Adrenal gland (tissue), 19 donors: ENCODE measurements at regions of chr10 and their contacts with region 1.

Region 1: DNA sequence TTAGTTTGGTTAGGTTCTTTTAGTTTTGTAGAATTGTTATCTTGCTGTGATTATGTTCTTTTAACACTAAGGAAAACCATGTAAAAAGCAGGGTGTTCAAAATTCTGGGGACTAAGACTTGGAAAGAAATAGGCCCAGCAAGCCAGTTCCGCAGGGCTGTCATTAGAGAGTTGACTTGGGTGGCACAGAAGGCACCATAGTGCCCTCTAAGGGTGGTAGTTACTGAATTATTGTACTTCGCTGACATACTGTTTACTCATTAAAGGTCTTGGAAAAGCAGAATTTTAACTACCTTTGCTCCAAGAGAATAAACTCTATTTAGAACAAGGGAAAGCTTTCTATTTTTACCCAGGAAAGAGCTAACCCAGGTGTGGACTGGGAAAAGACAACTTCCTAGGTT is 86.5 kb downstream of the OTUD1 start:
- DNase-seq: peak in 6 of 7 donors; percentile 25 to 69 (median 44)
- H3K4me3 ChIP-seq: no peak overlapping the region
- H3K27ac ChIP-seq: no peak overlapping the region
- H3K4me1 ChIP-seq: no peaks in the 10 kb centered on the region
- H3K27me3 ChIP-seq: no peaks in the 10 kb centered on the region
- CTCF ChIP-seq: peak; percentile 29 to 61 (median 56)
- POLR2A ChIP-seq: no peak

Region 2: GRCh38 chr10:23344241-23344841 is 181.1 kb before region 1 on chr10 and contains the start of gene C10orf67:
- intact Hi-C with region 1: no loop called
- DNase-seq: peak; percentile 13 to 54 (median 27)
- H3K4me3 ChIP-seq: peak within 1 kb of the TSS in 2 of 4 donors; percentile 41 to 63
- H3K27ac ChIP-seq: peak within 1 kb of the TSS in 1 of 5 donors; percentile 48
- H3K4me1 ChIP-seq: peaks cover 6 to 8% of the 10 kb centered on the region in 2 donors
- H3K27me3 ChIP-seq: no peaks in the 10 kb centered on the region
- CTCF ChIP-seq: no peak
- POLR2A ChIP-seq: no peak
- total RNA-seq, gene C10orf67: 0.23 to 0.50 (median 0.43) TPM in 3 of 9 donors, not detected in the others

Region 3: DNA sequence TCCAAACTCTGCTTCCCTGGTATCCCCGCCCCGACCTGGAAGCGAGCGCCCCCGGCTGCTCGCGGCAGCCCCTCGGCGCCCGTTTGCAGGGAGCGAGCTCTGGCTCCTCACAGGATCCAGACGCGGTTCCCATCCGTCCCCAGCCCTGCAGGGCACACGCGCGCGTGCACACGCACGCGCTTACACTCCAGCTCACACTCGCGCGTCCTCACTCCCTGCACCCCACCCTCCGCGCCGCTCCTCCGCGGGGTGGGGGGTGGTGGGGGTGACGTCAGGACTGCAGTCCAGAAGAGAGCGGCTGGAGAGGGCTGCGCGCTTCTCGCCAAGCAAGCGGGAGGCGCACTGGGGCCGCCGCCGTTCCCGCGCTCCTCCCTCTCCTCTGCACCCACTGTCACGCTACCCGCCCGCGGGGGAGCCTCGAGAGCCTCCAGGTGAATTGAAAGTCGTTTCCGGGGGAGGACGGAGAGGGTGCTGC is 169.1 kb after region 1 on chr10:
- intact Hi-C with region 1: loop called in 1 of 2 experiments (anchors 10 kb)
- DNase-seq: no peak
- H3K4me3 ChIP-seq: peak overlapping the region in 1 of 4 donors; percentile 22
- H3K27ac ChIP-seq: no peak overlapping the region
- H3K4me1 ChIP-seq: peaks cover 0 to 13% of the 10 kb centered on the region in 2 donors
- H3K27me3 ChIP-seq: peaks cover 42% of the 10 kb centered on the region
- CTCF ChIP-seq: no peak
- POLR2A ChIP-seq: no peak